Cardiac septum (tissue), 1 donor: ENCODE measurements at regions of chr6 and their contacts with region 1.

Region 1: DNA sequence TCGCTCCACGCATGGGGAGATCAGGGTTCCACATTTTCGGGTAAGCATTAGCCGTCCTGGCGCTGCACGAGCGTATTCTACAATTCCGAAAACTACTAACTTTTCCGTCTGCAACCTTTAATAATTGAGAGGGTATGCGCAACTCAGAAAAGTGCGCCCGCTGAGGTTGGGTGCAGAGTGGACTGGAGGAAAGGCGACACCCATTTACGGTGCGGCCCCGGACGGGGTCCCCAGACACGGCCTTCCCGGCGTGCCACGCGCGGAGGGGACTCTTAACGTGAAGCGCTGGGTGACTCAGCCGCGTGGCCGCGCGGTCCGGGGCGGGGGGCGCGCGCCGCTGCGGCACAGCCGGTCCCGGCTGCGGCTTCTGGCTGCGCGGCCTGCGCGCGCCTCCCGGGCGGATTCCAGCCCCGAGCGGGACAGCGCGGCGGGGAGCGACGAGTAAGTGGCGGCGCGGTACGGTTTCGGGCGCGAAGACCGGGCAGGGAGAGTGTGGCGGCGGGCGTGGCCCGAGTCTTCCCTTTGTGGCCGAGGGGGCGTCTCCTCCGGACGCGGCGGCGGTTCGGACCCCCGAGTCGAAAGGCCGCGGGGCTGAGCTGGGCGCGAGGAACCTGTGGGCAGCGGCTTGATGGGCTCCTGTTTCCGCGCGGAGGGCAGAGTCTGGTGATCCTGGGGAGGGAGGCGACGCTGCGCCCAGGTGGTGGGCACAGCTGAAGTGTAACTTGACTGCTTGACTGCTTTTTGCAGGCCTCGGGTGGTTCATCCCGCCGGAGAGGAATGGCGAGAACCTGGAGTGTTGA is at the starts of genes KCTD20 and PXT1:
- DNase-seq: peak; percentile 94
- total RNA-seq, gene KCTD20: 29.6 TPM
- total RNA-seq, gene PXT1: 0.22 TPM

Region 2: GRCh38 chr6:35948725-35949124 is 494.1 kb before region 1 on chr6:
- intact Hi-C with region 1: no loop called
- DNase-seq: no peak

Region 3: GRCh38 chr6:36387440-36388303 is 55.2 kb before region 1 on chr6 and contains the start of gene ETV7:
- intact Hi-C with region 1: no loop called
- DNase-seq: peak; percentile 81
- total RNA-seq, gene ETV7: 0.13 TPM

Region 4: GRCh38 chr6:36423101-36423824 is 19.6 kb before region 1 on chr6:
- intact Hi-C with region 1: loop called (anchors 1 kb)
- DNase-seq: peak; percentile 99

Region 5: DNA sequence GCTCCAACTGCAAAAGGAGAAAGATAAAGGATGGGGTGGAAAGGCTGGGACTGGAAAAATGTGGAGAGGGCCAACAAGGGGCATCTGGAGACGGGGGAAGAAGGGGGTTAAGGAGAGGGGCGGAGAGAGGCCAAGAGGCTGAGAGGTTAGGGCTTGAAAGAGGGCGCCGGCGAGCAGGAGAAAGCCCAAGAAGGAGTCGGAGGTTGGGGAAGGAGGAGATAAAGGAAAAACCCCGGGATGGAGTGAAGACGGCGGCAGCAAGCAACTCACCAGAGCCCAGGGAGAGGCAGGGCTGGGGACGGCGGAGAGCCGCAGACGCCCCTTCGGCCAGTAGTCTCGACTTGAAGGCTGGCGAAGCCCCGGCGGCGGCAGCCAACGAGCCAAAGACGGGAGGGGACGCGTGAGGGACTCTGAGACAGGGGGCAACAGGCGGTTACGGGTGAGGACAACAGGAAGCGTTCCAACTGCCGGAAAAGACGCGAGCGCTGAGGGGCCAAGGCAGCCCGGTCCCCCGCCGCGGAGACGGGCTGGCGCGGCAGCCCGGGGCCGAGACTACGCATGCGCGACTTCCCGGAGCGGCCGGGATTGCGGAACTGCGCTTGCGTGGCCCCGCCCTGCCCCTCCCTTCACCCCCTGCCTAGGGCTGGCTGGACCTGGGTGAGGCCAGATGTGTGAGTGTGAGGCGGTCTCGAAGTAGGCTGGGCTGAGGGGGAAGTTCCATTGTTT is 104.2 kb after region 1 on chr6 and contains the start of gene STK38:
- intact Hi-C with region 1: loop called (anchors 2 kb)
- DNase-seq: peak; percentile 98
- total RNA-seq, gene STK38: 31.6 TPM

Region 6: GRCh38 chr6:36563237-36563927 is 120.5 kb after region 1 on chr6:
- intact Hi-C with region 1: no loop called
- DNase-seq: no peak